PC-3 (cell line): ENCODE measurements at regions of chr7 and their contacts with region 1.

Region 1: GRCh38 chr7:55280031-55280454 is 85.1 kb upstream of the LANCL2 start:
- DNase-seq: peak; percentile 83
- ATAC-seq: peak; percentile 94
- H3K4me3 ChIP-seq: no peak overlapping the region
- H3K27ac ChIP-seq: no peak overlapping the region
- H3K4me1 ChIP-seq: no peaks in the 10 kb centered on the region
- H3K27me3 ChIP-seq: no peaks in the 10 kb centered on the region
- CTCF ChIP-seq: peak; percentile 81

Region 2: GRCh38 chr7:55593515-55594318 is 313.7 kb after region 1 on chr7:
- CTCF ChIA-PET with region 1: no interaction called
- POLR2A ChIA-PET with region 1: no interaction called
- intact Hi-C with region 1: loop called (anchors 5 kb)
- DNase-seq: peak; percentile 79
- ATAC-seq: peak; percentile 89
- H3K4me3 ChIP-seq: no peak overlapping the region
- H3K27ac ChIP-seq: no peak overlapping the region
- H3K4me1 ChIP-seq: no peaks in the 10 kb centered on the region
- H3K27me3 ChIP-seq: no peaks in the 10 kb centered on the region
- CTCF ChIP-seq: peak; percentile 86